ENCODE measurements at regions of chr15 and their contacts with region 1.

Region 1: DNA sequence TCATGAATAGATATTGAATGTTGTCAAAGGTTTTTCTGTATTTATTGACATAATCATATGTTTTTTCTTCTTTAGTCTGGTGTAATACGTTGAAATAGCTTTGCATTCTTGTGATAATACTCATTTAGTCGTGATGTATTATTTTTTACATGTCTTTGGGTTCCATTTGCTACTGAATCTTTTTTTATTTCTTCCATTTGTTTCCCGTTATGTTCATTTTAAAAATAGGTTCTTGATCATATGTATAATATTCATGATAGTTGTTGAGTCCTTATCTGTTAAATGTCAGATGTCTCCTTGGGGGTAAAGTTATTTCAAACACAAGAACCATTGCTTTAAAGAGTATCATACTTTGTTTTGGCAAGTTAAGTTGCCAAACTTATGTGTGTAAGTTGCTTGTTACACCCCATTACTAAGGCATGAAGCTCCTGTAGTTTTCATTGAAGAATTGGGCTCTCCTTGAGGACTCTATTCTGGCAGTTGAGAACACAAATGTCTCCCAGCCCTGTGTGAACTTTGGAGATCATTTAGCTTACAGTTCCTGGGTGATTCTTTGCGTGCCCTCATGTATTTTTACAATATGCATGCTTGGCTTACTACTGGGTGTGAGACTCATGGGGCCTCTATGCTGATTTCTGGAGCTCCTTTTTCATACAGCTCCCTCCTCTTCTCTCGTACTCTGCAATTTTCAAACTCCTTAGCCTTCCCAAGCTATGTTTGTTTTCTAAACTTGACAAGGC is 8.3 kb downstream of the AKAP13 start:
- DNase-seq: no peak
- ATAC-seq: peak; percentile 14; the same call in 1 of the 2 replicates
- H3K4me3 ChIP-seq: no peak overlapping the region
- H3K27ac ChIP-seq: no peak overlapping the region
- H3K4me1 ChIP-seq: peaks cover 7% of the 10 kb centered on the region; the same call in 1 of the 2 replicates
- H3K27me3 ChIP-seq: no peaks in the 10 kb centered on the region
- CTCF ChIP-seq: no peak
- POLR2A ChIP-seq: no peak
- RAD21 ChIP-seq: no peak

Region 2: GRCh38 chr15:85330901-85331588 is 57.7 kb before region 1 on chr15:
- CTCF ChIA-PET with region 1: no interaction called
- POLR2A ChIA-PET with region 1: no interaction called
- dilution Hi-C with region 1: no loop called
- in situ Hi-C with region 1: no loop called
- intact Hi-C with region 1: no loop called
- DNase-seq: peak; percentile 86
- ATAC-seq: peak; percentile 55
- H3K4me3 ChIP-seq: no peak overlapping the region
- H3K27ac ChIP-seq: peak overlapping the region; percentile 16; the same call in 1 of the 2 replicates
- H3K4me1 ChIP-seq: peaks cover 13% of the 10 kb centered on the region
- H3K27me3 ChIP-seq: no peaks in the 10 kb centered on the region
- CTCF ChIP-seq: peak; percentile 79
- POLR2A ChIP-seq: no peak
- RAD21 ChIP-seq: peak; percentile 88

Region 3: DNA sequence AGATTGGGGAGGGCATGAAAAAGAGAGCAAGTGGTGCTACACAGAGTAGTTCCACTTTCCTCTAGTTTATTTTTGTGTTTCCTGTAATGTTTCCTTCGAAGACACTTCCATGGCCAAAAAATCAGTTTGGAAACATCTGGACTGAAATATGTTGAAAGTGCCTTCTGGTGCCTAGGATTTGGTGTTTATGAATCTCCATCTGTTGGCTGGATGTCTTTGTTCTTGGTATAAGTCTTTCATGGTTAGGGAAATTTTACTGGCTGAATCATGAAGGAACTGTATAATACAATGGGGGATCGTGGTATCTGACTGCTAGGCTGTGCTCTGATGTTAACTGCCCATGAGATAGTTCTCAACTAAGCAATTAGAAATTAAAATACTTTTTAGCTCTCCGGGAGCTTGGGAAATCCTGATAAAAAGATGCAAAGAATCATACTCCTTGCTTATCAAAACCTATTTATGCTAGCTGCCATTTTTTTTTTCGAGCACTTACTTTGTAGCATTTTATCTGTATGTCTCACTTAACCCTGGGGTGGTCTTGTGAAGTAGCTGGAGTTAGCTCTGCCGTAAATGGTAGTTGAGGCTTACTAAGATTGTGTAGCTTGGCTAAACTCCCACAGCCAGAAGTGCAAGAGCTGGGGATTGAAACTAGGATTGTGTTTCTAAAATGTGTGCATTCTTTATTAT is 13.6 kb after region 1 on chr15:
- CTCF ChIA-PET with region 1: interaction called, 4 read pairs
- POLR2A ChIA-PET with region 1: interaction called, 5 read pairs
- dilution Hi-C with region 1: no loop called
- in situ Hi-C with region 1: no loop called
- intact Hi-C with region 1: loop called (anchors 2 kb)
- DNase-seq: peak; percentile 92
- ATAC-seq: peak; percentile 52
- H3K4me3 ChIP-seq: 0 out of 2 replicates have a peak overlapping the region, but pooled peaks have one; percentile 13
- H3K27ac ChIP-seq: peak overlapping the region; percentile 10; the same call in 1 of the 2 replicates
- H3K4me1 ChIP-seq: peaks cover 25% of the 10 kb centered on the region
- H3K27me3 ChIP-seq: no peaks in the 10 kb centered on the region
- CTCF ChIP-seq: no peak
- POLR2A ChIP-seq: no peak
- RAD21 ChIP-seq: no peak

Region 4: GRCh38 chr15:85646538-85647091 is 257.9 kb after region 1 on chr15:
- CTCF ChIA-PET with region 1: no interaction called
- POLR2A ChIA-PET with region 1: no interaction called
- dilution Hi-C with region 1: no loop called
- in situ Hi-C with region 1: no loop called
- intact Hi-C with region 1: no loop called
- DNase-seq: peak; percentile 93
- ATAC-seq: peak; percentile 76
- H3K4me3 ChIP-seq: no peak overlapping the region
- H3K27ac ChIP-seq: no peak overlapping the region
- H3K4me1 ChIP-seq: peaks cover 15% of the 10 kb centered on the region
- H3K27me3 ChIP-seq: no peaks in the 10 kb centered on the region
- CTCF ChIP-seq: no peak
- POLR2A ChIP-seq: no peak
- RAD21 ChIP-seq: no peak